ENCODE measurements at regions of chr2 and their contacts with region 1.

Region 1: DNA sequence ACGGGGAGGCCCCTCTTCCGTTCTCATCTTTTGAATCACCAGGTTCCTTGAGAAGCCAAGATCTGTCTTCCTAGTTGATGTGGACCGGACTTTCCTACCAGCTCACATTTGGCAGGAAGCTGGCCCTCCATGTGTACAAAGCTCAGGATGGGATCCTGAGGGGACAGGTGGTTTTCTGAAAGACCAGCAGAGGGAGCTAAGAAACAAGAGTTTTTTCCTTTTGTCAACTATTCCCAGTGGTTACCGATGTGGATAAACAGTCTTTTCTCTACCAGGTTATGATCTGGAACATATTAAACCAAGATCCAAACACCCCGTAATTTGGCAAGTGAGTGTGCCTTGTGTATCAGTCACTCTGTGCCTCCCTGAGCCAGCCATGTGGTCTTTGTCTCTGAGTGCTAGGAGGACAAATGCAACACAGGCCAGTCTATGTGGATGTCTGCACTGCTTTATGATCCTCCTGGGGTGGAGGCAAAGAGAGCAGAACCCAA is 25.1 kb upstream of the ARHGAP25 start:
- DNase-seq: peak; percentile 39
- H3K4me3 ChIP-seq: no peak overlapping the region
- H3K27ac ChIP-seq: no peak overlapping the region
- H3K4me1 ChIP-seq: no peaks in the 10 kb centered on the region
- H3K27me3 ChIP-seq: peaks cover 3% of the 10 kb centered on the region
- CTCF ChIP-seq: peak; percentile 63 to 81

Region 2: GRCh38 chr2:68673631-68674030 is 35.8 kb before region 1 on chr2:
- CTCF ChIA-PET with region 1: no interaction called
- dilution Hi-C with region 1: no loop called
- in situ Hi-C with region 1: no loop called
- intact Hi-C with region 1: no loop called
- DNase-seq: no peak
- H3K4me3 ChIP-seq: no peak overlapping the region
- H3K27ac ChIP-seq: no peak overlapping the region
- H3K4me1 ChIP-seq: no peaks in the 10 kb centered on the region
- H3K27me3 ChIP-seq: peaks cover 6% of the 10 kb centered on the region
- CTCF ChIP-seq: no peak

Region 3: DNA sequence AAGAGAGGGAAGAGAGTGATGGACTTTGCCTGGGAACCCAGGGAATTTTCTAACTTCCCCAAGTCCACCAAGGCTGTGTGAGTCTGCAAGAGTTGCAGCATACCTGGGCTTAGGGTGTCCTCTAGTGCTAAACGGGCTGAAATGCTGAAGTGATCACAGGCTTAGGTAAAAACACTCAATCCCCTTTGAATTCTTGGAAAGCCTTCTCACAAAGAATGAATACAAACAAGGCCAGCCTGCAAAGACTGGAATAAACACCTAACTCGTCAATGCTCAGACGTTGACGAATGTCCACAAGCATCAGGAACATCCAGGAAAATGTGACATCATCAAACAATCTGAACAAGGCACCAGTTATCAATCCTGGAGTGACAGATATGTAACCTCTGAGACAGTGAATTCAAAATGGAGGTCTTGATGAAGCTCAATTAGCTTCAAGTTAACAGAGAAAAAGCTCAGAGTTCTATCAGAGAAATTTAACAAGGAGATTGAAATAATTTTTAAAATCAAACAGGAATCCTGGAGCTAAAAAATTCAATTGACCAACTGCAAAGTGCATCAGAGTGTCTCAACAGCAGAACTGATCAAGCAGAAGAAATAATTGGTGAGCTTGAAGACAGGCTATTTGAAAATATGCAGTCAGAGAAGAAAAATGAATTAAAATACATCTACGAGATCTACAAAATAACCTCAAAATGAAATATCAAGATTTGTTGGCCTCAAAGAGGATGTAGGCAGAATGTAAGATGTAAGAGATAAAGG is 191.9 kb after region 1 on chr2:
- CTCF ChIA-PET with region 1: interaction called, 4 read pairs
- dilution Hi-C with region 1: no loop called
- in situ Hi-C with region 1: no loop called
- intact Hi-C with region 1: loop called (anchors 1 kb)
- DNase-seq: peak; percentile 28
- H3K4me3 ChIP-seq: no peak overlapping the region
- H3K27ac ChIP-seq: no peak overlapping the region
- H3K4me1 ChIP-seq: no peaks in the 10 kb centered on the region
- H3K27me3 ChIP-seq: no peaks in the 10 kb centered on the region
- CTCF ChIP-seq: peak in 1 of 2 donors; percentile 16

Region 4: DNA sequence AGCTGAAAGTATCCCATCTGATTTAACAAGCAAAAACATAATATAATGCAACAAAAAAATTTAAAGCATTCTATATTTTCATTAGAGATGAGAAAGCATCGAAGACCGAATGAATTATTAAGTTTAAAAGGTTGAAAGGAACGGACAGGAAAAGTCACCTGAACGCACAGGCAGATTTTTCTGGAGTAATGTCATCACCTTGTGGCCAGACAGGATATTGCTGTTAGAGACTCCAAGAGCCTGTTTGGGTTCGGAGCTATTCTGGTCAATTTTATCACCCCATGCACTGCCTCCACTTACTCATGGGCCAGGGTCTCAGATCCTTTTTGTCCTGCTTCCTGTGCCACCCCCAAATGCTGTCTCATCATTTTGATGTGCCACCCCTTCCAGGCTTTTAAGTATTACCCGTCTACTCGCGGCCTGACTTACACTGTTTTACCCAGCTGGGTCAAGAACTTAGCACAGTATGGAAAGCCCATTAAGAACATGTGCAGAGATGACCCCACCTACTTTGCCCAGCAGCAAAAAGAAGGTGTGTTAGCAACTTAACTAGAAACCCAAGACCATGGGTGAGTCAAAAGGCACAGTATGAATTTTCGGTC is 215.9 kb after region 1 on chr2:
- CTCF ChIA-PET with region 1: interaction called, 16 read pairs
- dilution Hi-C with region 1: no loop called
- in situ Hi-C with region 1: loop called in 1 of 2 experiments (anchors 5 kb)
- intact Hi-C with region 1: loop called (anchors 1 kb)
- DNase-seq: peak; percentile 55
- H3K4me3 ChIP-seq: no peak overlapping the region
- H3K27ac ChIP-seq: no peak overlapping the region
- H3K4me1 ChIP-seq: peaks cover 21% of the 10 kb centered on the region
- H3K27me3 ChIP-seq: no peaks in the 10 kb centered on the region
- CTCF ChIP-seq: peak; percentile 99

Region 5: GRCh38 chr2:69046221-69046662 is 336.8 kb after region 1 on chr2:
- CTCF ChIA-PET with region 1: no interaction called
- dilution Hi-C with region 1: no loop called
- in situ Hi-C with region 1: no loop called
- intact Hi-C with region 1: no loop called
- DNase-seq: peak; percentile 60
- H3K4me3 ChIP-seq: no peak overlapping the region
- H3K27ac ChIP-seq: no peak overlapping the region
- H3K4me1 ChIP-seq: peaks cover 9% of the 10 kb centered on the region
- H3K27me3 ChIP-seq: no peaks in the 10 kb centered on the region
- CTCF ChIP-seq: no peak

Measured in mammary epithelial cell (primary cell).